Heart left ventricle (tissue), 16 donors: ENCODE measurements at regions of chr2 and their contacts with region 1.

Region 1: GRCh38 chr2:69741619-69742466 is at the start of gene ANXA4:
- DNase-seq: peak; percentile 84 to 91 (median 87)
- ATAC-seq: peak; percentile 68 to 97 (median 94)
- H3K4me3 ChIP-seq: peak within 1 kb of the TSS; percentile 70 to 98 (median 92)
- H3K27ac ChIP-seq: peak within 1 kb of the TSS; percentile 81 to 95 (median 90)
- H3K4me1 ChIP-seq: peaks cover 0 to 43% (median 10%) of the 10 kb centered on the region in 12 donors
- H3K27me3 ChIP-seq: no peaks in the 10 kb centered on the region
- CTCF ChIP-seq: no peak
- POLR2A ChIP-seq: peak in 1 of 2 donors; percentile 87
- total RNA-seq, gene ANXA4: 7.3 to 73.5 (median 22.2) TPM

Region 2: DNA sequence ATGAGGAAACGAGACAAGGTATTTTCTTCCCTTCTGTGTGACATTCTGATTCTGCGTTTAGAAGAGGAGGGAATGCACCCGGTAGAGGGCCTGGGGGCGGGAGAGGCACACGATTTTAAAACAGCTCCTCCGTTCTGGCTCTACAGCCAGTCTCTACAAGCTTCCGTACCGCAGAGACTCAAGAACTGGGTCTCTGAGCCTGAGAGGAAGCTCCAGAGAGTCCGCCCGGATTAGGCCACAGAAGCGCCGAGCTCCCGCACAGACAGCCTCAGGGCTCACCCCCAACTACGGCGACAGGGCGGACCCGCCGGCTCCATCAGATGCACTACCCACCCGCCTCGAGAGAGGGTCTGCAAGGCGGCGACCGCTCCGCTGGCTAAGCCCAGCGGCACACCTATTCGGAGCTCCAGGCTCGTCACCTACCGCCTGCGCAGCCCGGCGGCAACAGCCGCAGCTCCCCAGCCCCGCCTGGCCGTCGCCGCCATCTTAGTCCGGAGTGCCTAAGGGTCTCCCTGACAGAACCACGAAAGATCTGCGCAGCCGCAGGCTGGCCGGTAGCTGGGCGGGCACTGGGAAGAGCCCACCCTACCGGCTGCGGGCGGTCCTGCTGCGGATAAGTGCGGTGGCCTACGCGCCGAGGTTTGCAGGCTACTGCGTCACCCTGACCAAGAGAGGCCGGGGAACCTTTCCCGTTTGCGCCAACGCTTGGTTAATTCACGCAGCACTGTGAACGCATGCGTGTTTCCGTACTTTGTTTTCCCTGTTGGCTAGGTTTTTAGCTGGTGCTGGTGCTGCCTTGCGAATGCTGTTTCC is 304.7 kb before region 1 on chr2 and contains the start of gene NFU1:
- intact Hi-C with region 1: no loop called
- DNase-seq: peak; percentile 94 to 97 (median 96)
- ATAC-seq: peak; percentile 97 to 99 (median 98)
- H3K4me3 ChIP-seq: peak within 1 kb of the TSS; percentile 70 to 97 (median 84)
- H3K27ac ChIP-seq: peak within 1 kb of the TSS; percentile 84 to 99 (median 96)
- H3K4me1 ChIP-seq: peaks cover 5 to 37% (median 21%) of the 10 kb centered on the region in 12 donors
- H3K27me3 ChIP-seq: no peaks in the 10 kb centered on the region
- CTCF ChIP-seq: peak; percentile 62 to 82 (median 75)
- POLR2A ChIP-seq: peak in 1 of 2 donors; percentile 84
- total RNA-seq, gene NFU1: 76.6 to 144 (median 110) TPM

Region 3: DNA sequence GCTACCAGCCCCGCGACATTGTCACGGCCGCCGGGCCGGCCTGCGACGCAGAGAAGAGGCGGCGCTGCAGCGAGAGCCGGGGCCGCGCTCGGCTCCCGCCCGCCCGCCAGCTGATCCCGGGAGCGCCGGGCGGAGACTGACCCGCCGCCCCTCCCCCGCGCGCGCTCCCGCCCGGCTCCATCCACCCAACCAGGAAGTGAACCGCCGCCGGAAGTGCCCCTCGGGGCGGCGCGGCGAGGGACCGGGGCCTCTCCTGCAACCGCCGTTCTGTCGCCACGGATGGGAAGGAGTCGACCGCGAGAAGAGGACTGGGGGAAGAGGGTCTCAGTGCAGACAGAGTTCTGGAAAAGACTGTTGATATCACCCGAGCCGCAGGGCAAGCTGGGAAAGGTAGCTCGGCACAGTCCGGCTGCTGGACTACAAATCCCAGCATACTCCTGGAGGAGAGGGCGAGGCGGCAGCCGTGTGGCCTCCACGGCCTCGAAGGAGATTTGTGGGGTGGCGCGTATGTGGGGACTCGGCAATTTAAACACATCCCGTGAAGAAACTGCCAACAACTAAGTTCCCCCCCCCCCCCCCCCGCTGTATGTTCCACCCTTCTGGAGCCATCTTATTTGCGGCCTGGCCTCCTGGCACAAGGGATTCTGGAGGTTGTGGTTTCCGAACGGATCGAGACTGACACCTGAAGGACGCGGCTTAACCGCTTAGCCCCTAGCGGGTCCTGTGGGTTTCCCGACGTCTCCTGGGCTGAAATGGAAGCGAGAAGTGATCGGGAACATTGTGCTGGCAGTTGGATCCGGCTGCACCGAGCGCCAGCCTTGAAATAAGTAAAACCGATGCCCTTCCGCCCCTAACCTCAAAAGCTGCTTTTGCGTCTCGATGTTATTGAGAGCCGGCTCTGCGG is 98.0 kb before region 1 on chr2 and contains the start of gene AAK1:
- intact Hi-C with region 1: no loop called
- DNase-seq: peak; percentile 93 to 95 (median 94)
- ATAC-seq: peak; percentile 80 to 95 (median 92)
- H3K4me3 ChIP-seq: peak within 1 kb of the TSS; percentile 70 to 99 (median 95)
- H3K27ac ChIP-seq: peak within 1 kb of the TSS; percentile 93 to 99 (median 98)
- H3K4me1 ChIP-seq: peaks cover 0 to 71% (median 40%) of the 10 kb centered on the region in 12 donors
- H3K27me3 ChIP-seq: no peaks in the 10 kb centered on the region
- CTCF ChIP-seq: peak in 1 of 12 donors; percentile 7
- POLR2A ChIP-seq: peak in 1 of 2 donors; percentile 85
- total RNA-seq, gene AAK1: 68.7 to 167 (median 131) TPM

Region 4: GRCh38 chr2:69781321-69782248 is 39.7 kb after region 1 on chr2:
- intact Hi-C with region 1: no loop called
- DNase-seq: no peak
- ATAC-seq: peak in 2 of 4 donors; percentile 36 to 50
- H3K4me3 ChIP-seq: no peak overlapping the region
- H3K27ac ChIP-seq: no peak overlapping the region
- H3K4me1 ChIP-seq: peaks cover 0 to 6% (median 0%) of the 10 kb centered on the region in 12 donors
- H3K27me3 ChIP-seq: no peaks in the 10 kb centered on the region
- CTCF ChIP-seq: no peak
- POLR2A ChIP-seq: no peak

Region 5: DNA sequence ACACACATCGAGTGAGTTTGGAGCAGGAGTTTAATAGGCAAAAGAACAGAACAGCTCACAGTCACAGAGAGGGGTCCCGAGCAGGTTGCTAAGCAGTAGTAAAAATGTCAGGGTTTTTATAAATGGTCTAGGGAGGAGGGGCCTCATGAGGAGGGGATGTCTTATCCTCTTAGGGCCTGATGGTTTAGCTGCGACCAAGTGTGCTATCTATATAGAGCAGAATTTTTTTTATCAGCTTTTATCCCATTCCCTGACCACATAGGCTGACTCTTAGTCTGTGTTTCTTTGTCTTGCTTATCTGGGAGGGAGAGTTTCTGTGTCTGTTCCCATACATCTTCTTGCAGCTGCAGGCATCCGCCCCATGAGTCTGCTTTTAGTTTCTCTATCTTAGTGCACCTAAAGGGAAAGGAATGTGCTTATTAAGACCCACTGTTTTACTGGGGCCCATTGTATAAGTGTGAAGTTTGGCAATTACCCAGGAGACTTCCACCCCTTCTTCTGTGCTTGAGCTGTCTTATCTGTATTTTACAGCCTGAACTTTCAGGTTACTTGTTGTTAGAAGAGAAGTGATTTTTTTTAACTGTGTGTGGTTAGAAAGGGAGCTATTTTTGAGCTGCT is 57.2 kb after region 1 on chr2:
- intact Hi-C with region 1: loop called in 2 of 10 experiments (anchors 10 kb)
- DNase-seq: no peak
- ATAC-seq: peak in 3 of 4 donors; percentile 5 to 50 (median 34)
- H3K4me3 ChIP-seq: peak overlapping the region in 10 of 12 donors; percentile 15 to 58 (median 40)
- H3K27ac ChIP-seq: peak overlapping the region in 11 of 12 donors; percentile 16 to 73 (median 51)
- H3K4me1 ChIP-seq: peaks cover 0 to 30% (median 19%) of the 10 kb centered on the region in 12 donors
- H3K27me3 ChIP-seq: no peaks in the 10 kb centered on the region
- CTCF ChIP-seq: no peak
- POLR2A ChIP-seq: no peak